Aorta (tissue), 5 donors: ENCODE measurements at regions of chr3 and their contacts with region 1.

Region 1: DNA sequence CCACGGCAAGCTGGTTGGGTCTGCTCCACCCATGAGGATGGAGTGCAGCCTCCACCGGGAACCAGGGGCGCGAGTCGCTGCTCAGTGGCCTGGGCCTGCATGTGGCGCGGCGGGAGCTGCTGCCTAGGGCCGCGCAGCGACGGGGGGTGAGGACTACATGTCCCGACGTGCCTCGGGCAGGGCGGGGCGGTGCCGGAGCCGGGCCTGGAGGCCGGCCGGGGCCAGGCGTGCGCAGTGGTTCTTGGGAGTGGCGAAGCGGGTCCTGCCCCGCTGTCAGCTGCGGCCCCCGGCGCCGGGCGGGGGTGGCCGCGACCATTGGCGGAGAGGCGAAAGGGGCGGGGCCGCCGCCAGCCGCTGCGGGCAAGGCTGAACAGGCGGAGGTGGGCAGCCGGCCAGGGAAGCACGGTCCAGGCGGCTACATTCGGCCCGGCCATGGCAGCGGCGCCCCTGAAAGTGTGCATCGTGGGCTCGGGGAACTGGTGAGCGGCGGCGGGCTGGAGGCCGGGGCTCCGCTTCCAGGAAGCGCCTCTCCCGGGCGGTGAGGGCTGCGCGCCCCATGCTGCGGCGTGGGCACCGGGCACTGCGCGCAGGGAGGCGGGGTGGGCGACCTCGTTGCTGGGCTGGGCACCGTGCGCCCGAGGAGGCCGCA is at the start of gene GPD1L:
- DNase-seq: peak; percentile 97 to 98
- ATAC-seq: peak; percentile 97
- H3K4me3 ChIP-seq: peak within 1 kb of the TSS; percentile 58 to 82
- H3K27ac ChIP-seq: peak within 1 kb of the TSS in 1 of 2 donors; percentile 75
- H3K4me1 ChIP-seq: no peaks in the 10 kb centered on the region
- H3K27me3 ChIP-seq: no peaks in the 10 kb centered on the region
- total RNA-seq, gene GPD1L: 33.4 to 48.4 TPM

Region 2: DNA sequence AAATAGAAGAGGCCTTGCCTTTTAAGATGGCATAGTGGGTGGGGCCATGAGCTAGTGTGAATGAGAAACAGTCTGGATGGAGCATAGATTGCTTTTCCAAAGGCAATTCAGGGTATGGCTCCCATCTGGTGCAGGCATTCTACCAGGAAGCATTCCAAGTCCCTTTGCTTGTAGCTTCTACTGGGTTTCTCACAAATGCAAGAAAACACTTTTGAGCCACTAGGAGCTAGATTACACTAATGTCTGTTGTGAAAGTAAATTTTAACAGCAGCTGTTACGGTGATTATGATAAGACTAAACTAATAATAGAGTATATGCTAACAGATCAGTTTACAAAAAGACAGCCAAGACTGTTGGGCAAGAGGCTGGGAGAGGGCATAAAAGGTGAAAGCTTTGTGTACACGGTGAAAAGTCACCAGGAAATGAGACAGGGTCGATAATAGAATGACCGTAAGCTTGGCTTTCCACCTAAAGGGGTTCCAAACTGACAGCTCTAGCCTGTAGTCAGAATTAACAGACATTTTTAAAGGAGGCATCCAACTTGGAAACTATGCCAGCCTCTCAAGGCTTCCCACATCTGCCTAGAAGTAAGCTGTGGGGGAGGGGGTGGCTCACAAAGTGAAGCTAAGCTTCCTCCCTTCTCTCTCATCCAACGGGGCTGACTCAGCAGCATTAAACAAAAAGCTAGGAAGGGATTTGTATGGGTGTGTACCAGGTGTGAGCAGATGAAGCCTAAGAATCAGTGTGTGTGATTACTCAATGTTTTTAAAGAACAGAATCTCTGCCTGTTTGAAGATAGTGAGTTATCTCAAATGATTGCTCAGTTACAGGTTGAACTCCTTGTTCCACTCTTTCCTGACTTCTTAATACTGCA is 61.1 kb before region 1 on chr3:
- intact Hi-C with region 1: loop called in 1 of 2 experiments (anchors 10 kb)
- DNase-seq: no peak
- ATAC-seq: peak; percentile 59
- H3K4me3 ChIP-seq: peak overlapping the region in 1 of 2 donors; percentile 26
- H3K27ac ChIP-seq: peak overlapping the region; percentile 12 to 36
- H3K4me1 ChIP-seq: no peaks in the 10 kb centered on the region
- H3K27me3 ChIP-seq: no peaks in the 10 kb centered on the region

Region 3: GRCh38 chr3:32257639-32258038 is 151.2 kb after region 1 on chr3:
- intact Hi-C with region 1: no loop called
- DNase-seq: no peak
- ATAC-seq: no peak
- H3K4me3 ChIP-seq: no peak overlapping the region
- H3K27ac ChIP-seq: no peak overlapping the region
- H3K4me1 ChIP-seq: no peaks in the 10 kb centered on the region
- H3K27me3 ChIP-seq: no peaks in the 10 kb centered on the region